Dorsolateral prefrontal cortex (tissue), 120 donors: ENCODE measurements at regions of chr5 and their contacts with region 1.

Region 1: GRCh38 chr5:115841382-115842088 is at the starts of genes AP3S1 and ATG12:
- DNase-seq: peak; percentile 81 to 93 (median 92)
- H3K4me3 ChIP-seq: peak within 1 kb of the TSS; percentile 63 to 99 (median 92)
- H3K27ac ChIP-seq: peak within 1 kb of the TSS; percentile 32 to 98 (median 94)
- H3K27me3 ChIP-seq: no peaks in the 10 kb centered on the region
- CTCF ChIP-seq: peak in 20 of 56 donors; percentile 5 to 38 (median 20)
- total RNA-seq, gene AP3S1: 50.0 to 149 (median 97.8) TPM
- total RNA-seq, gene ATG12: 38.8 to 69.4 (median 50.4) TPM

Region 2: DNA sequence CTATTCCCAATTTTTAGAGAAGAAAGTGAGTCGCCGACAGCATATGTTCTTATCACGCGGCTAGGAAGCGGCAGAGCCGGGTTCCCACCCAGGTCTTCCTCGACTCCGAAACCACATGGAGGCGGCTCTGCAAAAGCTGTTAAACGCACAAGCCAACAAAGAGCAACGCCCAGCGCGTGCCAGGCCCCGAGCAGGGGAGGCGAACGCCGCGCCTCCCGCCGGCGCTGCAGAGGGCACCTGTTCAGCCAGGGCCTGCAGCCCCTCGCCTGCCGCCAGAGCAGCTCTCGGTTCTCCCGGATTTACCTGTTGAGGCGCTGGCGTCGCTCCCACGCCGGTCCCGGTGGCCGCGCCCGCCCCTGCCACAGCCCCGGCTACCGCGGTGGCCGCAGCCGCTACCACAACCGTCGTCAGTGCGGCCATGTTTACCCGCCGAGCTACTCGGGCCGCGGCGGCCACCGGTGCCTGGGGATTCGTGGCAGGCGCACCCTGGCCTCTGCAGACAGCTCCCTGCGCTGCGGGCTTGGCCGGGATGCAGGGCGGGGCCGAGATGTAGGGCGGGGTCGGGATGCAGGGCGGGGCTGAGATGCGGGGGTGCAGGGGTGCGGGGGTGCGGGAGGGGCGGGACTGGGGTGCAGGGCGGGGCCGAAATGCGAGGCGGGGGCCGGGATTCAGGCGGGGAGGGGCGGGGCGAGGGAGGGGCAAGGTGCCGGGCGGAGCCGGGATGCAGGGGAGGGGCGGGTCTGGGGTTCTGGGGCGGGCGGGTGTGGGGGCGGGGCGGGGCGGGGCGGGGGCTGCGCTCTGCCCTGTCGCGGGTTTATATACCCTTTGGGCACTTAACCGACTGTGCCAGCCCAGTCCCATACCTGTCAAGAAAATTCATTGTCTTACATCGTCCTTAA is 545.2 kb before region 1 on chr5 and contains the start of gene CCDC112:
- intact Hi-C with region 1: loop called (anchors 5 to 10 kb)
- DNase-seq: peak; percentile 58 to 87 (median 74)
- H3K4me3 ChIP-seq: peak within 1 kb of the TSS; percentile 62 to 99 (median 94)
- H3K27ac ChIP-seq: peak within 1 kb of the TSS in 55 of 59 donors; percentile 13 to 91 (median 77)
- H3K27me3 ChIP-seq: no peaks in the 10 kb centered on the region
- CTCF ChIP-seq: peak in 4 of 56 donors; percentile 11 to 15 (median 14)
- total RNA-seq, gene CCDC112: 5.8 to 17.1 (median 10.8) TPM

Region 3: GRCh38 chr5:115309751-115310370 is 531.7 kb before region 1 on chr5:
- intact Hi-C with region 1: loop called in 1 of 2 experiments (anchors 5 kb)
- DNase-seq: no peak
- H3K4me3 ChIP-seq: no peak overlapping the region
- H3K27ac ChIP-seq: no peak overlapping the region
- H3K27me3 ChIP-seq: no peaks in the 10 kb centered on the region
- CTCF ChIP-seq: peak; percentile 62 to 97 (median 81)

Region 4: GRCh38 chr5:115625579-115626444 is 215.7 kb before region 1 on chr5 and contains the start of gene TMED7:
- intact Hi-C with region 1: loop called in 1 of 2 experiments (anchors 2 kb)
- DNase-seq: peak; percentile 98 to 100 (median 99)
- H3K4me3 ChIP-seq: peak within 1 kb of the TSS; percentile 58 to 99 (median 89)
- H3K27ac ChIP-seq: peak within 1 kb of the TSS; percentile 66 to 96 (median 91)
- H3K27me3 ChIP-seq: no peaks in the 10 kb centered on the region
- CTCF ChIP-seq: peak in 39 of 56 donors; percentile 8 to 59 (median 33)
- total RNA-seq, gene TMED7: 48.1 to 112 (median 68.4) TPM

Region 5: DNA sequence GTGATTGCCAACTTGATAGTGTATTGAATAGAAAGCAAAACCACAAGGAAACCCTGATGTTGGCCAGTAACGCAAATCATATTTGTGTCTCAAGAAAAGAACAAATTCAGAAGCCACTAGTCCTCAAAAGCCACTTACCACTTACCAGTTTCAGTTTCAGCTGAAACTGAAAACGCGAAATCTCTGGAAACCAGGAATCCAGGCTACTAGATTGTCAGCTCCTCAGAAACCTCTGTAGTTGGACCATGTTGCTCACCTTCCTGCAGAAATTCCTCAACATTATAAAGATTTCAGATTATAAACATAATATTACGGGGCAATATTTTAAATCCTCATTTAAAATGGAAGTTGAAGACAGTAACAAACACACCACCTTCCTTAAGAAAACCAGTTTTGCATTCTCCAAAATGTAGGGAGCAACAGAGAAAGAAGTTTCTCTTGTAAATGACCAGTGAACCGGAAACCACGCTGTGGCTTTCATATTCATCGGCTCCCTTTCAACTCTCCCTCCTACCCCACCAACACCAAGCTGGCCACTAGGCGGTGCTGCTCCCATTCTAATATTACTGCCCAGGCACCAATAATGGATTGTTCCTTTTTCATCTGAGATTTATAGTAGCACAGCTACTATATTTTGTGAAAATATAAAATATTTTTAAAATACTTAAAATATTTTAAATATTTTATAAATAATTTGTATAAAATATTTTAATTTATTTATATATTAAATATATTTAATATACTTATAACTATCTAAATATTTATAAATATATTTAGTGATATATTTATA is 207.0 kb before region 1 on chr5:
- intact Hi-C with region 1: loop called in 1 of 2 experiments (anchors 2 kb)
- DNase-seq: peak; percentile 74 to 93 (median 86)
- H3K4me3 ChIP-seq: peak overlapping the region in 58 of 59 donors; percentile 4 to 66 (median 48)
- H3K27ac ChIP-seq: peak overlapping the region in 48 of 59 donors; percentile 4 to 83 (median 62)
- H3K27me3 ChIP-seq: no peaks in the 10 kb centered on the region
- CTCF ChIP-seq: peak; percentile 76 to 97 (median 91)

Region 6: DNA sequence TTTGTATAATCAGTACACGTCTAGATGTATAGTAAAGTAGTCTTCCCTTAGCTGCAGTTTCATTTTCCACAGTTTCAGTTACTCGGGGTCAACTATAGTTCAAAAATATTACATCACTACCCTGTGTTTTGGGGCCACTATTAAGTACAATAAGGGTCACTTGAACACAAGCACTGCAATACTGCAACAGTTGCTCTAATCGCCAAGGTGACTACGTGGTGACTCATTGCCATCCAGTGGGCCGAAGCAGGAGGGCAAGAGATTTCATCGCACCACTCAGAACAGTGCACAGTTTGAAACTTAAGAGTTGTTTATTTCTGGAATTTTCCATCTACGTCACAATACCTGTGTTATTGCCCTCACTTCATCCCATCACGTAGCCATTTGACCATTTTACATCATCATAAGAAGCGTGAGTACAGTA is 190.6 kb after region 1 on chr5 and contains the start of gene ARL14EPL:
- intact Hi-C with region 1: loop called in 1 of 2 experiments (anchors 10 kb)
- DNase-seq: no peak
- H3K4me3 ChIP-seq: no peak within 1 kb of the TSS
- H3K27ac ChIP-seq: peak within 1 kb of the TSS in 1 of 59 donors; percentile 20
- H3K27me3 ChIP-seq: no peaks in the 10 kb centered on the region
- CTCF ChIP-seq: peak in 22 of 56 donors; percentile 12 to 55 (median 34)
- total RNA-seq, gene ARL14EPL: 0.26 to 0.89 (median 0.56) TPM in 4 of 120 experiments, not detected in the others